Common myeloid progenitor, CD34-positive (primary cell): ENCODE measurements at regions of chr12 and their contacts with region 1.

Region 1: DNA sequence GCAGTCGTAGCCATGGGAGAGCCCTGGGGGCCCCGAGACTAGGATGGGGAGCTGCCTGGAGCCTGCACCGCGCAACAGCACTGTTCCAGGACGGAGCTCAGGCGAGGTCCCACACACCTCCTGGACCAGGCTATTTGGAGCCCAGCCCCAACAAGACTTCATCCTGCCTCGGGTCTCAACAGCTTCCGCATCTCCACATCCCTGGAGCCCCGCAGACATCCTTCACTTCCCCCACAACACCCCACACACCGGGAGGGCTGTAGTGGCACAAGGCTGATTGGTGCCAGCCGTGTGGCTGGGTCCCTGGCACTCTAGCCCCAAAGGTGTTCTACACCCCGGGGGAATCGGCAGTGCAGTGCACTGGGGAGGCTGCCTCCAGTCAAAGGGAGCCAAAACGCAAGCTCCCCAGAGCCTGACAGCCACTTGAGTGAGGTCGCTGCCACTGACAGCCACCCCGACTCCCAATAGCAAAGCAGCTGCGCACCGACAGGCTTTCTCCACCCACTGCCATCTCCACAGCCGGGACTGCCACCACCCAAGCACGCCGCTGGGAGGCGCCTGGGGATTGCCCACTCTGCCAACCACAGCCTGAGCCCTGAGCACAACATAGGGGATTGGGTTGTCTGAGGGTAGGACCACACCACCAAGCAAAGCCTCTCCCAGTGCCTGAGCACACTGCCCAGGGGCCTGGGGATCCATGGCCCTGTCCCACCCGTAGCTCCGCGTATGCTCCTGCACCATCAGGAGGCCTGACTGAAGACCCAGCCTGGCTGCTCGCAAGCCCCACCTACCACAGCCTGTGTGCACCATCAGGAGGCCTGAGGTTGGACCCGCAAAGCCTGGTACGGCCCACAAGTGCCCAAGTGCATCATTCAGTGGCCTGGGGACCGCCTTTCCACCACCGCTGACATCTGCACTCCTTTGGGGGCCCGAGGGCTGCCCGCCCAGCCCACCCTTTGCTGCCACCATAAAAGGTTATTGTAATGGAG is 13.2 kb upstream of the KLRF1 start:
- DNase-seq: peak; percentile 85 to 93 (median 92)
- H3K4me3 ChIP-seq: peak overlapping the region; percentile 55 to 89 (median 72)
- H3K27ac ChIP-seq: no peak overlapping the region
- H3K4me1 ChIP-seq: peaks cover 4 to 42% (median 12%) of the 10 kb centered on the region in 4 experiments
- H3K27me3 ChIP-seq: no peaks in the 10 kb centered on the region

Region 2: DNA sequence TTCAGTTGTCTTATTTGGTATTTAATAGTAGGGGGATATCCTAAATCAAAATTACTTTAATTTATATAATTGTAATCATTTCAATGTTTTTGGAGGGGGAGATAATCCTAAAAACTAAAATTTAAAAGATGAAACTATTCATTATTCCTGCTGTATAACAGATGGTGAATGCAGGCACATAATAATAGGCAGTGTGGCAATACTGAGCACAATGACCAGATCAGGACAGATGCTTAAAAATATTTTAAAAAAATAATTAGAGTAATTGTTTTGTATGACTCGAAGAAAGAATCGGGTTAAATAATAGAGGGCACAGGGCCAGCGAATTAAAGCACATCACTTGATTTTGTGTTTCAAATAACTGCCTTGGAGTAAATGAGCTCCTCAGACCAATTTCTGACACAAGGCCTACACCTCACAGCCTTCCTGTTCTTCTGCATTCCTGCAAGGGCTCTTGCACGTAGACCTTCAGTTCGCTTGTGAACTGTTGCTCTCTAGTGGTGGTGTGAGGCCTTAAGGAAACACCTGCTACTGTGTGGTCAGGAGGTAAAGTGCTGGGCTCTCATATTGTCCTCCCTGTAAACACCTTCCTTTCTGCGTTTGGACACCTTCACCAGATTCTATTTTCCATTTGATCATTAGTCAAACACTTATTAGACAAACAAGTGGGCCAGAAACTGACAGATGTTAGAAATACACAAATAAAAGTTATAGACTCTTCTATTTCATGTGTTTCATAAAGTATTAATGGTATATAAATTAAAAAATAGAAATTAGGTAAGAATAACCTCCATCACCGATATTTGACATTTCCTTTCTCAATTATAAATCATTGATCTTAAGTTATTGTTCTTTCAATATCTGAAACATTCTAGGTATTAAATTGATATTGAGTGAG is 16.1 kb before region 1 on chr12:
- CTCF ChIA-PET with region 1: interaction called, 37 read pairs
- POLR2A ChIA-PET with region 1: no interaction called
- DNase-seq: peak; percentile 91 to 96 (median 93)
- H3K4me3 ChIP-seq: no peak overlapping the region
- H3K27ac ChIP-seq: peak overlapping the region in 1 of 2 experiments; percentile 27
- H3K4me1 ChIP-seq: peaks cover 29 to 59% (median 47%) of the 10 kb centered on the region in 4 experiments
- H3K27me3 ChIP-seq: no peaks in the 10 kb centered on the region

Region 3: DNA sequence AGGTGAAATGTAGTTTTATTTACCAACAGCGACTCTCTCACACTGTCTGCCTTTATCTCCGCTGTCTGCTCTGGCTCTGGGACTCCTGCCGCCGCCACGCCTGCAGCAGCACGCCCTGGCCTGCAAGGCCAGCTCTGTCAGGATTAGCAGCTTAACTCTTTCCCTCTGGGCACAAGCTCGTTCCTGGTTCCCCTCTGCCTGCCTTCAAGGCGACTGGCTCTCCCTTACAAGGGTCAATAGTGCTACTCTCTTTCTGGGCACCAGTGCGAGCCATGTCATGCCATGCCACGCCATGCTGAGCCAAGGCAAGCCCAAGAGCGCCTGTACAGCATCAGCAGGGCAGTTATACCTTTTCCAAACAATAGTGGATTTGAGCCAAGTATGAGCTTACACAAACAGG is 58.6 kb after region 1 on chr12:
- CTCF ChIA-PET with region 1: interaction called, 10 read pairs
- POLR2A ChIA-PET with region 1: no interaction called
- DNase-seq: no peak
- H3K4me3 ChIP-seq: no peak overlapping the region
- H3K27ac ChIP-seq: no peak overlapping the region
- H3K4me1 ChIP-seq: peaks cover 14 to 27% (median 15%) of the 10 kb centered on the region in 4 experiments
- H3K27me3 ChIP-seq: no peaks in the 10 kb centered on the region

Region 4: GRCh38 chr12:9920451-9920850 is 106.3 kb after region 1 on chr12:
- CTCF ChIA-PET with region 1: interaction called, 17 read pairs
- POLR2A ChIA-PET with region 1: no interaction called
- DNase-seq: no peak
- H3K4me3 ChIP-seq: no peak overlapping the region
- H3K27ac ChIP-seq: no peak overlapping the region
- H3K4me1 ChIP-seq: peaks cover 0 to 7% (median 0%) of the 10 kb centered on the region in 4 experiments
- H3K27me3 ChIP-seq: no peaks in the 10 kb centered on the region

Region 5: DNA sequence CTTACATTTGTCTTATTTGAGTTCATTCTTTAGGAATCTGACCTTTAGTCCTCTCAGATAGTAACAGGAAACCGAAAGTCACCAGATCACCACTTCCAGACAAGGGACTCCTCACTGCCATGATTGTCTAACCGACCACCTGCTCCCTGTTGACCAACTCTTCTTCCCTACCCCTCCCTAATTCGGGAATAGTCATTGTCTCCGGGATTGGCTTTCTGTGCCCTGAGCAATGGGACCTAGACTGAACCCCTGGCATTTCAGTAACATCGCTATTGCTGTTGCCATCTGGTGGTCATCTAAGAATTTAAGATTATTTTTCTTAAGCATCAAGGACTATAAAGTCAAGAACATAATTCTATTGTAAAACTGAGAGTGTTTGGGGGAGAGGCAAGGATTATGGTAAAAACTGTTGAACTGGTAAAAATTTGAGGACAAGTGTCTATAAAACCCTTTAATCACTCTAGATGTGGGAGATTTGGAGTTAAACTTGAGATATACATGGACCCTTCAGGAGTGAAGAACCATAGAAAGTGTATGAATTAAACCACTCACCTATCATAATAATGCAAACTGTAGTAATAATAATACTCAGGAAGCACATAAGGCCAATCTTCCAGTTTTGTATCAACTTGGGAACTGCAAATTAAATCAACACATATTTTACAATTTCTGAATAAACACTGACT is 111.7 kb after region 1 on chr12:
- CTCF ChIA-PET with region 1: interaction called, 21 read pairs
- POLR2A ChIA-PET with region 1: no interaction called
- DNase-seq: peak; percentile 56 to 64 (median 57)
- H3K4me3 ChIP-seq: peak overlapping the region in 6 of 7 experiments; percentile 33 to 72 (median 43)
- H3K27ac ChIP-seq: no peak overlapping the region
- H3K4me1 ChIP-seq: peaks cover 0 to 21% (median 2%) of the 10 kb centered on the region in 4 experiments
- H3K27me3 ChIP-seq: no peaks in the 10 kb centered on the region

Region 6: GRCh38 chr12:10001171-10001776 is 187.2 kb after region 1 on chr12:
- CTCF ChIA-PET with region 1: interaction called, 10 read pairs
- POLR2A ChIA-PET with region 1: no interaction called
- DNase-seq: peak in 1 of 3 donors; percentile 12
- H3K4me3 ChIP-seq: no peak overlapping the region
- H3K27ac ChIP-seq: no peak overlapping the region
- H3K4me1 ChIP-seq: peaks cover 0 to 15% (median 3%) of the 10 kb centered on the region in 4 experiments
- H3K27me3 ChIP-seq: no peaks in the 10 kb centered on the region